ENCODE measurements at regions of chr4 and their contacts with region 1.

Region 1: DNA sequence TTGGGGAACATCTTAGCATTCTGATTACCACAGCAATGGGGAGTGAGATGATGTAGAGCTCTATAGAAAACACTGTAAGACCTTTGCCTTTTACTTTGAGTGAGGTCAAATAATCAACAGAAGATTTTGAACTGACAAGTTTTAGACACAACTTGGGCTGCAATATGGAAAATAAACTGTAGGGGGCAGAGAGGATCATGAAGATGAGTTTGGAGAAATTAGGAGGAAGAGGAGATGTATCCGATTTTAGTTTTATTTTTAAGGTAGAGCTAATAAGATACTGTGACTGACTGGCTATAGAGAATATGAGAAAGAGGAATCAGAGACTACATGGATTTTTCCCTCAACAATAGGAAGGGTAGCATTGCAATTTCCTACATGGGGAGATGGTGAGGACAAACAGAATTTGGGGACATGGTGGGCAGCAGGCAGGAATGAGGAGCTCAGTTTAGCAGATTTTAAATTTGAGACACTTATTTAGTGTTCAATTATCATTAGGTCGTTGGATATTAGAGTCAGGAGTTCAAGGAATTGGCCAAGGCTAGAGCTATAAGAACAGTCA is 563.1 kb downstream of the INPP4B start:
- DNase-seq: no peak
- H3K4me3 ChIP-seq: no peak overlapping the region
- H3K27ac ChIP-seq: no peak overlapping the region
- H3K4me1 ChIP-seq: no peaks in the 10 kb centered on the region
- H3K27me3 ChIP-seq: no peaks in the 10 kb centered on the region
- CTCF ChIP-seq: peak in 3 of 4 experiments; percentile 8 to 26 (median 13)
- EP300 ChIP-seq: no peak
- POLR2A ChIP-seq: no peak

Region 2: DNA sequence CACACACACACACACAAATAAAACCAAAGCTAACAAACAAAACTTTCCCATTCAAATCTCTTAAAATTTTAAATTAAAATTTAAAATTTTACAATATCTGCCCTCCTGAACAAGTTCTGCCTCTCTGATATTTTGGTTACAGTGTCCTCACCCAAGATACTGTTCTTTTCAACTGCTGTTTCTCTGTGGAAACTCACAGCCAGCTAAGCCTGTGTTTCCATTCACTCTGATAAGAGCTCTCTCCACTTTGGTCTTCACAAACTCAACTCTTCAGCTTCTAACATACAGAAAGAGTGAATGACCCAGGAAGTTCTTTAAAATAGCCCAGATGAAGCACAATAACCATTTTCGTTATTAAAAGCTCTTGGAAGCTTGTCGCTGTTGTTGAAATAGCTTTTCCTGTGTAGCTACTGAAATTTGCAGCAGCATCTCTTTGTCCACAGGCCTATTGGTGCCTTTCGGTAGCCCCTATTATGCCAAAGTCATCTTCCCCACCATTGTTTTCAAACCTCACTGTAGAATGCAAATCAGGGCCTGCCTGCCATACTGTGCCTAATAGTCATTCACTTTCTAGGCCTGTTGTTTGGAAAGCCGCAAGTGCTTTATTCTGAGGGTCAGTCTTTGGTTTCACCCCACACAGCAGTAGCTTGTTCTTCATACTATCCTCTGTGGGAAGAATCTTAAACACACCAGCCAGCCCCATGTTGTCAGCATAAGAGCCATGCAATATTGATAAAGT is 543.7 kb after region 1 on chr4:
- intact Hi-C with region 1: loop called (anchors 5 kb)
- DNase-seq: no peak
- H3K4me3 ChIP-seq: no peak overlapping the region
- H3K27ac ChIP-seq: no peak overlapping the region
- H3K4me1 ChIP-seq: no peaks in the 10 kb centered on the region
- H3K27me3 ChIP-seq: no peaks in the 10 kb centered on the region
- CTCF ChIP-seq: no peak
- EP300 ChIP-seq: no peak
- POLR2A ChIP-seq: no peak

Measured in sigmoid colon (tissue), 7 donors.